Heart left ventricle (tissue), 16 donors: ENCODE measurements at regions of chr17 and their contacts with region 1.

Region 1: DNA sequence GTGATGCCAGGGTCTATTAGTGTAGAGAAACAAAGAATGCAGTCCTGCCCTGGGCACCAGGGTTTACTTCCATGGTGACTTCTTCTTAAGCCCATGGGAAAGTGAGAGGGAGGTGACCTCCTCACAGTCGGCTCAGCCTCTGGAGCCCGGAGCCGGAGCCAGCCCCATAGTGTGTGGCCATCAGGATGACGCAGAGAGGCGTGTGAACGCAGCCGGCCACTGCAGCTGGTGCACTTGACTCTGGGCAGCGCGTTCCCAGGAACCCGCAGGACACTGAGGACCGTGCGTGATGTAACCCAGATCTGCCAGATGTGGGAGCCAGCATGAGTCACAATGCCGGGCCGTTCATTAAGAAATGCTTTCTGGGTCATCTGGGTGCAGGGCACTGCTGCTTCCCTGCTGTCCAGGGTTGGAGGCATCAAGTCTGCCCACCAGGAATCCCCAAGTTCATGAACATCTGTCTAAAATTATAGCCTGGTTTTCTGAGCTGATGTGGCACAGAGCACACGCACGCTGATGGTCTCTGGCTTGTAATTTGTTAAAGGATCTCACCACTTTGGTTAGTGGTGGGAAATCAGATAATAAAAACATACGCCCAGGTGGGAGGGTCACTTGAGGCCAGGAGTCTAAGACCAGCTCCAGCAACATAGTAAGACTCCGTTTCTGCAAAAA is 114.1 kb downstream of the PITPNC1 start:
- DNase-seq: peak; percentile 86 to 95 (median 93)
- ATAC-seq: peak; percentile 96 to 99 (median 98)
- H3K4me3 ChIP-seq: peak overlapping the region in 9 of 12 donors; percentile 30 to 49 (median 38)
- H3K27ac ChIP-seq: peak overlapping the region in 11 of 12 donors; percentile 22 to 84 (median 72)
- H3K4me1 ChIP-seq: peaks cover 0 to 55% (median 38%) of the 10 kb centered on the region in 12 donors
- H3K27me3 ChIP-seq: no peaks in the 10 kb centered on the region
- CTCF ChIP-seq: no peak
- POLR2A ChIP-seq: peak in 1 of 2 donors; percentile 32

Region 2: DNA sequence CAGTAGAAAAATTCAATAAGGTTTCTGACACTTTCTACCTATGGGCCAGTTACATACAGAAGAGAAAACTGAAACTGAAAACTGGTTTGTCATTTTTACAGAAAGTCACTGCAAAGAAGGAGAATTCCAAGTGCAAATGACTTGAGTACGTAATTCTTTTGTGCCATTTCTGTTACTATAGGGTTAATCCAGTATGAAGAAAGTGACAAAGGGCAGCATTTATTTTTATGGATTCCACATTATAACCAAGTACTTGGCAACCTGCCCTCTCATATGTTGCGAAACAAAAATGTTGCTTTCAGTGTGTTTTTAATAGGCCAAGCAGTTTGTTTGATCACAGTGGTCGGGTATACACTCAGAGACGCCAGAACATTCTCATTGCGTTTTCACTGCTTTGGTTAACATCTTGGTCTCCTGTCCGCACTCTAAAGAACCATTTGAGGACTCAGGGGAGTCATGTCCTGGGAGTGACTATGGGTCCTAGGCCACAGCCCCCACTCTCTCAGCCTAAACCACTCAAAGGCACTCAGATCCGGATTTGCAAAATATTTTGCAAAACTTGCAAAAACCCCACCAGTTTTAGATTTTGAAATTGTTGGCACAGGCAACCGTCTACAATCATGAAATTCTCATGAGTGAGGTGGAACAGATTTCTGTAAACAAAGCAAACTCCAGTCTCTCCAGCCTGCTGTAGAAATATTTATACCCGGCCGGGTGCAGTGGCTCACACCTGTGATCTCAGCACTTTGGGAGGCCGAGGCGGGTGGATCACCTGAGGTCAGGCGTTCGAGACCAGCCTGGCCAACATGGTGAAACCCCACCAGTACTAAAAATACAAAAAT is 230.8 kb before region 1 on chr17:
- intact Hi-C with region 1: no loop called
- DNase-seq: peak in 2 of 5 donors; percentile 29 to 31
- ATAC-seq: peak; percentile 37 to 74 (median 54)
- H3K4me3 ChIP-seq: peak overlapping the region in 3 of 12 donors; percentile 0 to 24 (median 3)
- H3K27ac ChIP-seq: peak overlapping the region in 11 of 12 donors; percentile 1 to 87 (median 44)
- H3K4me1 ChIP-seq: peaks cover 0 to 55% (median 0%) of the 10 kb centered on the region in 12 donors
- H3K27me3 ChIP-seq: no peaks in the 10 kb centered on the region
- CTCF ChIP-seq: no peak
- POLR2A ChIP-seq: no peak

Region 3: DNA sequence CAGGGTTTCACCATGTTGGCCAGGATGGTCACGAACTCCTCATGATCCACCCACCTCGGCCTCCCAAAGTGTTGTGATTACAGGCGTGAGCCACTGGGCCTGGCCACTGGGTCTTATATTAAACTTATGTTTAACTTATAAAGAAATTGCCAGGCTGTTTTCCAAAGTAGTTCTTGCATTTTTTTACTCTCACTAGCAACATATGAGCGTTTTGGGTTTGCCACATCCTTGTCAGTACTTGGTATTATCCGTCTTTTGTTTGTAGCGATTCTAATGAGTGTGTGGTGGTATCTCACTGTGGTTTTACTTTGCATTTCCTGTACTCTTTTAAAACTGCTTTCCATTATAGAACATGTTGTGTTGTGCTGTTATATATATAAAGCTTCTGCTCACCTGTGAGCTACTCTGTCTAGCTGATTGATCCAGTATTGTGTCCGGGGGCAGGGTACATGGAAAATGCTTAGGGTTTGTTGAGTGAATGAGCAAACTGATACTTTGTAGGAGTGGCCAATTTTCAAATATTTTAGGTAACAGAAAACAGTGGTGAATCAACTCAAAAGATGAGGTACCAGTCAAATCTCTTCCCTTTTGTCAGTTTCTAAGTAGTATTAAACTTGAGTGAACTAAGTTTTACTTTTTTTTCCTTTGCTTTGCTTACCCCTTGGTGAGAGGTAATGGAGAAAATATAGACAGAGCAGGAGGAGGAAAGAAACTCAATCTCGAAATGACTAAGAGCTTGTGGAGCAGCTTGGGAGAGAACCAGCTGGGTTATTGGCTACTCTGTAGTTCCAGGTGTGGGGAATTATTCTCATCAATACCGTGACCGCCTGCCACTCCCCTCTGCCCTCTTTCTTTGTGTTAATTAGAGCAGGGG is 38.2 kb before region 1 on chr17:
- intact Hi-C with region 1: no loop called
- DNase-seq: no peak
- ATAC-seq: peak in 1 of 4 donors; percentile 16
- H3K4me3 ChIP-seq: peak overlapping the region in 1 of 12 donors; percentile 13
- H3K27ac ChIP-seq: peak overlapping the region in 1 of 12 donors; percentile 76
- H3K4me1 ChIP-seq: peaks cover 0 to 51% (median 0%) of the 10 kb centered on the region in 12 donors
- H3K27me3 ChIP-seq: no peaks in the 10 kb centered on the region
- CTCF ChIP-seq: no peak
- POLR2A ChIP-seq: no peak

Region 4: DNA sequence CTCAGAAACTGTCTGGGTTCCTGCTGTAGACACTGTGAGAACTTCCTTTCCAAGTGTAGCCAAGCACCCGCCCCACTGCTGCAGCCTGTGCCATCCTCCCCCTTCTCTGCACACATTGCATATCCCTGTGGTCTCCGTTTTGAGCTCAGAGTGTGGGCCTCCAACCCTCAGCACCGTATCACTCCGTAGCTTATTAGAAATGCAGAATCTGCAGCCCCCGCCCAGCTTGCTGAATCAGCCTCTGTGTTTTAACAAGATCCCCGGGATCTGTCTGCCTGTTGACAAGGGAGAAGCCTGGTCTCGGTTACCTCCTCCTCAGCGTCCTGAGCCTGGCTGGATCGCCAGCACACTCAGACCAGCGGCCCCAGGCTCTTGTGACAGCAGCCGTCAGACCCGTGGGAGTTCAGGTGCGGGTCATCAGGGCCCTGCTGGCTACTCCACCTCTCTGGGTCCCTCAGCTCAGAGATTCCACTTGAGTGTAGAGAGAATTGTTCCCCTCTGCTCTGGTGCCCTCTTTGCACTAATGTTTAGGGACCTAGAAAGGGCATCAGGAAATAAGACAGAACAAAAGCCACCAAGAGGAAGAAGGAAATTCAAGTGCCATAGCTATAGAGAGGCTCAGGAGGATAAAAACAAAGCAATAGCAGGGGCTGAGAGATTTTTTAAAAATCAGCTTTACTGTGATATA is 21.8 kb before region 1 on chr17:
- intact Hi-C with region 1: no loop called
- DNase-seq: peak in 1 of 5 donors; percentile 63
- ATAC-seq: peak in 3 of 4 donors; percentile 19 to 41 (median 30)
- H3K4me3 ChIP-seq: no peak overlapping the region
- H3K27ac ChIP-seq: peak overlapping the region; percentile 47 to 79 (median 69)
- H3K4me1 ChIP-seq: peaks cover 0 to 33% (median 13%) of the 10 kb centered on the region in 12 donors
- H3K27me3 ChIP-seq: no peaks in the 10 kb centered on the region
- CTCF ChIP-seq: no peak
- POLR2A ChIP-seq: no peak

Region 5: DNA sequence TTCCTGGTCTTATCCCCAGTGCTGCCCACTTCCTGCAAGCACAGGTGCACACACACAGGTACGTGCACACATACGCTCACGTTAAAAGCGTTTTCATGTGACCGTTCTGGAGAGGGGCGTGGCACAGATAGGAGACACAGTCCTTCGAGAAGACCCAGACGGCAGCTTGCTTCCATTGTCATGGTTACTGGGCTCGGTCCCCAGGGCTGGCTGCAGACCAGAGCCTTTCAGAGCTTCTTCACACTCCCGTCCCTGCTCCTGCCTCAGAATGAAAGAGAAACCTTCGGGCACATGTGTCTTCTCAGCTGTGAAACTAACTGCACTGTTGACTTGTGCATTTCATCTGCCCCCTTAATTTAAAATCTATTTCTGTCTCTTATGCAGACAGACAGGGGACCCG is 40.1 kb after region 1 on chr17:
- intact Hi-C with region 1: loop called in 1 of 10 experiments (anchors 5 kb)
- DNase-seq: peak in 2 of 5 donors; percentile 21 to 34
- ATAC-seq: no peak
- H3K4me3 ChIP-seq: peak overlapping the region in 2 of 12 donors; percentile 7 to 13
- H3K27ac ChIP-seq: no peak overlapping the region
- H3K4me1 ChIP-seq: peaks cover 0 to 36% (median 16%) of the 10 kb centered on the region in 12 donors
- H3K27me3 ChIP-seq: no peaks in the 10 kb centered on the region
- CTCF ChIP-seq: no peak
- POLR2A ChIP-seq: no peak

Region 6: GRCh38 chr17:67602956-67603355 is 111.8 kb after region 1 on chr17:
- intact Hi-C with region 1: loop called in 3 of 10 experiments (anchors 10 kb)
- DNase-seq: no peak
- ATAC-seq: no peak
- H3K4me3 ChIP-seq: no peak overlapping the region
- H3K27ac ChIP-seq: no peak overlapping the region
- H3K4me1 ChIP-seq: peaks cover 0 to 42% (median 31%) of the 10 kb centered on the region in 12 donors
- H3K27me3 ChIP-seq: no peaks in the 10 kb centered on the region
- CTCF ChIP-seq: peak in 9 of 12 donors; percentile 12 to 29 (median 25)
- POLR2A ChIP-seq: no peak